AG04449 (cell line): ENCODE measurements at regions of chr9 and their contacts with region 1.

Region 1: GRCh38 chr9:121698627-121699570 is 47.5 kb downstream of the DAB2IP start:
- DNase-seq: no peak
- H3K4me3 ChIP-seq: peak overlapping the region; percentile 61
- CTCF ChIP-seq: no peak

Region 2: DNA sequence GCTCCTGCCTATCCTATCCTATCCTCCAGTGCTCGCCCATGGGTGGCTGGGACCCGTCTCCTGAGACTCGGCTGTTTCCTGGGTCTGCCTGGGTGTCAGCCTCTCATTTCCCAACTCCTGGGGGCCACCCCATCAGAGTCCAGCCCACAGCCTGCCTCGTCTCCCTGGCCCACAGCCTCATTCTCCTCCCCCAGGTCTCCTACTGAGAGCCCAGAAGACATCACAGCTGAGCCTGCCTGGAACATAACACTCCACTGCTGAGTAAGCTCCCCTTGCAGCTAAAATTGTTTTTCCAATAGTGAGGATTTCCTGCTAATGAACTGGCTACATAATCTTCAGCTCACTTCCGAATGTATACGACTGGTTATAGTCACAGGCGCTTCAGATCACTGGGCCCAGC is 298.9 kb after region 1 on chr9:
- CTCF ChIA-PET with region 1: interaction called, 15 read pairs
- POLR2A ChIA-PET with region 1: no interaction called
- DNase-seq: no peak
- H3K4me3 ChIP-seq: no peak overlapping the region
- CTCF ChIP-seq: no peak

Region 3: GRCh38 chr9:122159026-122159924 is 460.4 kb after region 1 on chr9 and contains the starts of genes MORN5 and NDUFA8:
- CTCF ChIA-PET with region 1: no interaction called
- POLR2A ChIA-PET with region 1: no interaction called
- DNase-seq: peak; percentile 57
- H3K4me3 ChIP-seq: peak within 1 kb of the TSS; percentile 99
- CTCF ChIP-seq: no peak